Calu3 (cell line): ENCODE measurements at regions of chr11 and their contacts with region 1.

Region 1: DNA sequence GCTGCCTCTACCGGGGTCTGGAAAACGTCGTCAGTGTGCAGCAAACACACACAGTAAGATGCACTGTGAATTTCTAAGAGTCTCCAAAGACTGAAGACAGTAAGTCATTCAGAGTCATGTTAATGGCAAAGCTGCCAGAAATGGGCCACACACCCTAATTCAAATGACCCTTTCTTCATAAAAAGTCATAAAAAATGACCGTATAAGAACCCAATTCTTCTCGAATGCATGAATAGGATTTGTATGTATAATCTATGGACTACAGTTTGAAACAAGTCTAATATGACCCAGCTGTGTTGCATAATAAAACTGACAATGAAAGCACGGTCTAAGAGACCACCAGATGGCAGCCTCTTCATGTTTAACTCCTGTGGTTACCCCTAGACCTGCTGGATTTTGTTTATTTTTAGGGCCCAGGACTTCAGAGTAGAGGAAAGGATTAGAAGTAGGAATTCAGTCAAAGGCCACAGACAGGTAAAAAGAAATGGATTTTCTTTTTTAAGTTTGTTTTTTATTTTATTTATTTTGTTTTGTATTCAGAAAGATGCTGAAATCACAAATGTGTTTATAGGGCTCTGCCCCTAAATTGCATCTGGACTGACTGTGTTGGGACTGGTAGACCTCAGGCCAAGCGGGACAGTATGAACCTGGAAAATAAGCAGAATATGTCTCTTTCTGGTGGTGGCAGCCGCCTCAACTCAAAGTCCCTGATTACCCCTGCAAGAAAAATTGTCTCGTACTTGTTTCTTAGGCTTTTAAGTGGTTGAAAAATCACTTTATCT is 32.1 kb upstream of the SLC5A12 start:
- DNase-seq: peak; percentile 44
- H3K4me3 Mint-ChIP-seq: no peak overlapping the region
- H3K27ac Mint-ChIP-seq: no peak overlapping the region
- H3K4me1 Mint-ChIP-seq: no peaks in the 10 kb centered on the region
- H3K27me3 Mint-ChIP-seq: peaks cover 11% of the 10 kb centered on the region
- CTCF ChIP-seq: peak; percentile 59

Region 2: DNA sequence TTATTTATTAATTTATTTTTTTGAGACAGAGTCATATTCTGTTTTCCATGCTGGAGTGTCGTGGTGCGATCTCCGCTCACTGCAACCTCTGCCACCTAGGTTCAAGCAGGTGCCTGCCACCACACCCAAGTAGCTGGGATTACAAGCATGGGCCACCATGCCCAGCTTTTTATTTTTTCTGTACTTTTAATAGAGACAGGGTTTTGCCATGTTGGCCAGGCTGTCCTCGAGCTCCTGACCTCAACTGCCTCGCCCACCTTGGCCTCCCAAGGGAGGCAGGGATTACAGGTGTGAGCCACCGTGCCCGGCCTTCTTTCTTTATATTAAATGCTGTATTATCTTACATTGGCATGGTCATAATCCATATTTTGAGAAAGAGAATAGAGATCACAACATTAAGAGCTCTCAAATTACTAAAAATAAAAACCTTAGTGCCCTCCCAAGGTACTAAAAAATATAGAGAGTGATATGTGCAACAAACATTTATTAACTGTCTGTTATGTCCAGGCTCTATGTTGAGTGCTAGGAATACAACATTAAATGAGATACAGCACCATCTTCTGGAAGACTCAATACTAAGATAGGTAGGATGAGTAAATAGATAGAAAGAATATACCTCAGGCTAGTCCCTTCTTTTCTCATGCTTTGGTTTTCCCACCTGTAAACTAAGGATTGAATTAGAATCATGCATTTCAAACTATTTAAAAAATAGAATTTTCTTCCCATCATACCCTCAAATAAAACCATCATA is 370.8 kb after region 1 on chr11:
- CTCF ChIA-PET with region 1: no interaction called
- intact Hi-C with region 1: loop called (anchors 1 kb)
- DNase-seq: no peak
- H3K4me3 Mint-ChIP-seq: no peak overlapping the region
- H3K27ac Mint-ChIP-seq: no peak overlapping the region
- H3K4me1 Mint-ChIP-seq: no peaks in the 10 kb centered on the region
- H3K27me3 Mint-ChIP-seq: peaks cover 16% of the 10 kb centered on the region
- CTCF ChIP-seq: no peak

Region 3: DNA sequence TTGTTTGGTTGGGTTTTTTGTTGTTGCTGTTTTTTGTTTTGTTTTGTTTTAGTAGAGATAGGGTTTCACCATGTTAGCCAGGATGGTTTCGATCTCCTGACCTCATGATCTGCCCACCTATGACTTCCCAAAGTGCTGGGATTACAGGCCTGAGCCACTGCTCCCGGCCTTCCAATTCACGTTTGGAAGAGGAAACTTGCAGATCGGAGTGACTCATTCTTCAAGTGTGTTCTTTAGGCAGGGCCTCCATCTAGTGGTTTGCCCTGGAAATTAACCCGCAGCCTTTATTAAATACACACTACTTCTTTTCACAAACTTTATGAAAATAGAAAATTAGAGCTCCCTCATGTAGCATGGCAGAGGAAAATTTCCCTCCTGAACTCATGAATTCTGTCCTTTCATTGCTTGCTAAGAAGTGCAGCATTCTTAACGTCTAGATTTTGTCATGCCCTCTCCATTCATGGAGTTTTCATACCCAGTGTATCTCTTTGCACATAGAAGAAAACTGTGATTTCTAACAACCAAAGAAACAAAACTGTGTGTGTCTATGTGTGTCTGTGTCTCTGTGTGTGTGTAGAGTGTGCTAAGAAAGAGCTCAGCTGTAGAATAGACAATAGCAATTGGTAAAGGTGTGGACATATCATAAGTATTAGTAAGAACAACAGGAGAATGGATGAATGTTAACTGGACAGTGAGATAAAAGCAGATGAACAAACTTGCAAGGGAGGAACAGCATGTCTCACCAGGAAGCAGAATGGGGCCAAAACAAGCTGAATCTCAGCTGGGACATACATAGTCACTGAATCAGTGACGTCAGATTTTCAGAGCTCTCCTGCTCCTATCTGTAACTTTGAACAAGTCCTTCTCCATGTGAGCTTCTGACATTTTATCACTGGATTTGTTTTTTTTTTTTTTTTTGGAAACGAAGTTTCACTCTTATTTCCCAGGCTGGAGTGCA is 405.1 kb after region 1 on chr11:
- CTCF ChIA-PET with region 1: interaction called, 17 read pairs
- intact Hi-C with region 1: loop called (anchors 1 kb)
- DNase-seq: peak; percentile 53
- H3K4me3 Mint-ChIP-seq: no peak overlapping the region
- H3K27ac Mint-ChIP-seq: no peak overlapping the region
- H3K4me1 Mint-ChIP-seq: peaks cover 8% of the 10 kb centered on the region
- H3K27me3 Mint-ChIP-seq: peaks cover 23% of the 10 kb centered on the region
- CTCF ChIP-seq: peak; percentile 71